ENCODE measurements at regions of chr19 and their contacts with region 1.

Region 1: GRCh38 chr19:12777217-12778016 is 2.1 kb upstream of the HOOK2 start:
- DNase-seq: peak; percentile 69
- H3K4me3 ChIP-seq: peak overlapping the region; percentile 45 to 49
- H3K27ac ChIP-seq: peak overlapping the region; percentile 92 to 93
- H3K4me1 ChIP-seq: peaks cover 3% of the 10 kb centered on the region
- H3K27me3 ChIP-seq: no peaks in the 10 kb centered on the region
- CTCF ChIP-seq: peak; percentile 96 to 98 (median 97)
- POLR2A ChIP-seq: peak; percentile 21

Region 2: GRCh38 chr19:12681074-12681951 is 96.1 kb before region 1 on chr19 and contains the start of gene DHPS:
- intact Hi-C with region 1: no loop called
- DNase-seq: peak; percentile 95
- H3K4me3 ChIP-seq: peak within 1 kb of the TSS; percentile 81 to 99
- H3K27ac ChIP-seq: peak within 1 kb of the TSS; percentile 90 to 95
- H3K4me1 ChIP-seq: no peaks in the 10 kb centered on the region
- H3K27me3 ChIP-seq: no peaks in the 10 kb centered on the region
- CTCF ChIP-seq: peak in 1 of 4 experiments; percentile 18
- POLR2A ChIP-seq: peak; percentile 66
- total RNA-seq, gene DHPS: 140 to 178 TPM

Region 3: GRCh38 chr19:12789904-12790619 is 12.6 kb after region 1 on chr19:
- intact Hi-C with region 1: loop called (anchors 1 kb)
- DNase-seq: peak; percentile 94
- H3K4me3 ChIP-seq: peak overlapping the region; percentile 79 to 85
- H3K27ac ChIP-seq: peak overlapping the region; percentile 100
- H3K4me1 ChIP-seq: peaks cover 46% of the 10 kb centered on the region
- H3K27me3 ChIP-seq: no peaks in the 10 kb centered on the region
- CTCF ChIP-seq: peak in 1 of 4 experiments; percentile 19
- POLR2A ChIP-seq: peak; percentile 79

Region 4: DNA sequence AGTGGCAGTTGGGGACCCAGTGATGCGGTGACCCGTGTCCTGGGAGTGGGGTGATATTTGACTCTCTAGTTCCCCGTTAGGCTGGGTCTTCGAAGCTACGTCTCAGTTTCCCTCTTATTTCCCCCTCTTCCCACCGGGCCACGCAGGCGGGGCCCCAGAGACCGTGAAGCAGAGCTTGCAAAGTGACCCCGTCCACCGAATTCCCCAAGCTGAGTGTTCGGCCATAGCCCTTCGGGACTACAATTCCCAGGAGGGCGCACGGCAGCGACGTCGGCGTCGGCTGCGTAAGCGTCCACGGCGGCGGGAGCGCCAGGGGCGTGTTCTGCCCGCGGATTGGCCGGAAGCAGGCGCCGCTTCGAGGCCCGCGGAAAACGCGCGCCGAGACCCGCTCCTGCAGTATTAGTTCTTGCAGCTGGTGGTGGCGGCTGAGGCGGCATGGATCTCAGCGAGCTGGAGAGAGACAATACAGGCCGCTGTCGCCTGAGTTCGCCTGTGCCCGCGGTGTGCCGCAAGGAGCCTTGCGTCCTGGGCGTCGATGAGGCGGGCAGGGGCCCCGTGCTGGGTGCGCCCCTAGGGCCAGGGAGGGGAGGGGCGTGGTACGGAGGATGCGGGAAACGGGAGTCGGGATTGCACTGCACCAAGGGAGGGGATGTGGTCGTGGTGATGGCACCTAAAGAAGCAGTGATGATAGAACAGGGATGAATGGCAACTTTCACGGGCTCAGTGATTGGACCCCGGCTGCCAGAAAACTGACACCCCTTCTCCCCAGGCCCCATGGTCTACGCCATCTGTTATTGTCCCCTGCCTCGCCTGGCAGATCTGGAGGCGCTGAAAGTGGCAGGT is 29.0 kb after region 1 on chr19 and contains the start of gene RNASEH2A:
- intact Hi-C with region 1: loop called (anchors 5 kb)
- DNase-seq: peak; percentile 85
- H3K4me3 ChIP-seq: peak within 1 kb of the TSS; percentile 47
- H3K27ac ChIP-seq: peak within 1 kb of the TSS in 1 of 2 donors; percentile 62
- H3K4me1 ChIP-seq: no peaks in the 10 kb centered on the region
- H3K27me3 ChIP-seq: no peaks in the 10 kb centered on the region
- CTCF ChIP-seq: peak in 2 of 4 experiments; percentile 34 to 37
- POLR2A ChIP-seq: no peak
- total RNA-seq, gene RNASEH2A: 8.7 to 11.5 TPM

Region 5: GRCh38 chr19:12983542-12984142 is 206.2 kb after region 1 on chr19:
- intact Hi-C with region 1: no loop called
- DNase-seq: peak; percentile 78
- H3K4me3 ChIP-seq: peak overlapping the region; percentile 18 to 26
- H3K27ac ChIP-seq: peak overlapping the region; percentile 47 to 70
- H3K4me1 ChIP-seq: no peaks in the 10 kb centered on the region
- H3K27me3 ChIP-seq: no peaks in the 10 kb centered on the region
- CTCF ChIP-seq: peak; percentile 98 to 99 (median 99)
- POLR2A ChIP-seq: peak; percentile 24

Measured in prostate gland (tissue), 2 donors.